ENCODE measurements at regions of chr20 and their contacts with region 1.

Region 1: DNA sequence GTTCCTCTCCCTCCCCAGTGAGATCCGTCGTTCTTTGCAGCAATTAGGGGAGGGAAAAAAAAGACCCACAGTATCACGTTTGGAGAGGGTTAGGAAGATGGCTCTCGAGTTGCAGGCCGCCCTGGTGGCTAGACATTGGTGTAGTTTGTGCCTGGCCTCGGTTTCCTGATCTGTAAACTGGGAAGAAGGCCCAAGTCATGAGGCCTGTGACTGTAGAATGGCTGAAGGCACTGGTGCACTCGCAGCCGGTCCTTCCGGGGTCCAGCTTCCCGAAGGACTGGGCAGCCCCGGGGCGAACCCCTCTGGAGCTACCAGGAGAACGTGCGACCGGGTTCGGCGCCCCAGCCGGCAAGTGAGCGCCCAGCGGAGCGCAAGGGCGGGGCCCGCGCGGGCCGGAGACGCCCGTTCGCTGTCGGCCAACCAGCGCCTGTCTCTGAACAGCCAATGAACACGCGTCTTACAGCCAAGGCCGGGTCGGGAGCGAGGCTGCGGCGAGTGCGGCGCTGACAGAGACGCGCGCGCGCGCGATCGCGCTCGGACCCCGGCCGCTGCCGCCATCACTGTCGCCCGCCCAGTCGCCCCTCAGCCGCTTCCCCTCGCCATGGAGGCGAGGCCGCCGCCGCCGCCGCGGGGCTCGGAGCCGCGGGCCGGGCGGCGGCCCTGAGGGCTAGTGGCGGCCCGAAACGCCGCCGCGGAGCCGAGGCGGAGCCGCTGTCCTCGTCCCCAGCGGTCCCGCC is at the start of gene PTPRA:
- DNase-seq: peak; percentile 80 to 91 (median 88)
- ATAC-seq: peak; percentile 96
- H3K4me3 ChIP-seq: peak within 1 kb of the TSS; percentile 80
- H3K4me3 Mint-ChIP-seq: peak within 1 kb of the TSS; percentile 84 to 96 (median 94)
- H3K27ac ChIP-seq: peak within 1 kb of the TSS; percentile 71
- H3K27ac Mint-ChIP-seq: peak within 1 kb of the TSS; percentile 83 to 95 (median 90)
- H3K4me1 ChIP-seq: peaks cover 25% of the 10 kb centered on the region in 2 donors
- H3K4me1 Mint-ChIP-seq: peaks cover 31 to 47% (median 42%) of the 10 kb centered on the region in 7 donors
- H3K27me3 ChIP-seq: no peaks in the 10 kb centered on the region
- H3K27me3 Mint-ChIP-seq: no peaks in the 10 kb centered on the region
- total RNA-seq, gene PTPRA: 68.0 to 86.6 (median 81.2) TPM

Region 2: GRCh38 chr20:2544211-2544610 is 329.0 kb before region 1 on chr20:
- CTCF ChIA-PET with region 1: no interaction called
- POLR2A ChIA-PET with region 1: no interaction called
- intact Hi-C with region 1: no loop called
- DNase-seq: no peak
- ATAC-seq: no peak
- H3K4me3 ChIP-seq: no peak overlapping the region
- H3K4me3 Mint-ChIP-seq: no peak overlapping the region
- H3K27ac ChIP-seq: no peak overlapping the region
- H3K27ac Mint-ChIP-seq: no peak overlapping the region
- H3K4me1 ChIP-seq: no peaks in the 10 kb centered on the region
- H3K4me1 Mint-ChIP-seq: no peaks in the 10 kb centered on the region
- H3K27me3 ChIP-seq: no peaks in the 10 kb centered on the region
- H3K27me3 Mint-ChIP-seq: peaks cover 9 to 50% (median 40%) of the 10 kb centered on the region in 5 donors

Region 3: GRCh38 chr20:2693286-2694000 is 179.7 kb before region 1 on chr20:
- CTCF ChIA-PET with region 1: no interaction called
- POLR2A ChIA-PET with region 1: no interaction called
- intact Hi-C with region 1: loop called (anchors 1 kb)
- DNase-seq: peak; percentile 15 to 70 (median 38)
- ATAC-seq: peak; percentile 73
- H3K4me3 ChIP-seq: no peak overlapping the region
- H3K4me3 Mint-ChIP-seq: peak overlapping the region in 4 of 10 donors; percentile 14 to 72 (median 42)
- H3K27ac ChIP-seq: no peak overlapping the region
- H3K27ac Mint-ChIP-seq: no peak overlapping the region
- H3K4me1 ChIP-seq: peaks cover 2% of the 10 kb centered on the region in 2 donors
- H3K4me1 Mint-ChIP-seq: peaks cover 16 to 26% (median 20%) of the 10 kb centered on the region in 7 donors
- H3K27me3 ChIP-seq: peaks cover 4 to 9% of the 10 kb centered on the region in 2 donors
- H3K27me3 Mint-ChIP-seq: peaks cover 16 to 55% (median 23%) of the 10 kb centered on the region in 5 donors

Region 4: GRCh38 chr20:2822073-2822472 is 51.1 kb before region 1 on chr20:
- CTCF ChIA-PET with region 1: no interaction called
- POLR2A ChIA-PET with region 1: interaction called, 3 read pairs
- intact Hi-C with region 1: loop called in 1 of 2 experiments (anchors 10 kb)
- DNase-seq: peak in 7 of 9 donors; percentile 53 to 67 (median 62)
- ATAC-seq: peak; percentile 90
- H3K4me3 ChIP-seq: no peak overlapping the region
- H3K4me3 Mint-ChIP-seq: peak overlapping the region in 9 of 10 donors; percentile 60 to 86 (median 73)
- H3K27ac ChIP-seq: no peak overlapping the region
- H3K27ac Mint-ChIP-seq: peak overlapping the region in 2 of 9 donors; percentile 56
- H3K4me1 ChIP-seq: peaks cover 14 to 18% of the 10 kb centered on the region in 2 donors
- H3K4me1 Mint-ChIP-seq: peaks cover 25 to 35% (median 34%) of the 10 kb centered on the region in 7 donors
- H3K27me3 ChIP-seq: no peaks in the 10 kb centered on the region
- H3K27me3 Mint-ChIP-seq: peaks cover 8 to 57% (median 23%) of the 10 kb centered on the region in 5 donors

Region 5: GRCh38 chr20:2955257-2955970 is 82.2 kb after region 1 on chr20:
- CTCF ChIA-PET with region 1: no interaction called
- POLR2A ChIA-PET with region 1: no interaction called
- intact Hi-C with region 1: no loop called
- DNase-seq: no peak
- ATAC-seq: no peak
- H3K4me3 ChIP-seq: no peak overlapping the region
- H3K4me3 Mint-ChIP-seq: no peak overlapping the region
- H3K27ac ChIP-seq: no peak overlapping the region
- H3K27ac Mint-ChIP-seq: peak overlapping the region in 1 of 9 donors; percentile 13
- H3K4me1 ChIP-seq: no peaks in the 10 kb centered on the region
- H3K4me1 Mint-ChIP-seq: peaks cover 11 to 22% (median 16%) of the 10 kb centered on the region in 7 donors
- H3K27me3 ChIP-seq: no peaks in the 10 kb centered on the region
- H3K27me3 Mint-ChIP-seq: no peaks in the 10 kb centered on the region

Region 6: GRCh38 chr20:2983508-2983907 is 110.3 kb after region 1 on chr20:
- CTCF ChIA-PET with region 1: interaction called, 3 read pairs
- POLR2A ChIA-PET with region 1: no interaction called
- intact Hi-C with region 1: loop called in 1 of 2 experiments (anchors 2 kb)
- DNase-seq: no peak
- ATAC-seq: no peak
- H3K4me3 ChIP-seq: no peak overlapping the region
- H3K4me3 Mint-ChIP-seq: no peak overlapping the region
- H3K27ac ChIP-seq: no peak overlapping the region
- H3K27ac Mint-ChIP-seq: no peak overlapping the region
- H3K4me1 ChIP-seq: peaks cover 0 to 7% of the 10 kb centered on the region in 2 donors
- H3K4me1 Mint-ChIP-seq: peaks cover 4 to 31% (median 7%) of the 10 kb centered on the region in 7 donors
- H3K27me3 ChIP-seq: no peaks in the 10 kb centered on the region
- H3K27me3 Mint-ChIP-seq: no peaks in the 10 kb centered on the region

Region 7: DNA sequence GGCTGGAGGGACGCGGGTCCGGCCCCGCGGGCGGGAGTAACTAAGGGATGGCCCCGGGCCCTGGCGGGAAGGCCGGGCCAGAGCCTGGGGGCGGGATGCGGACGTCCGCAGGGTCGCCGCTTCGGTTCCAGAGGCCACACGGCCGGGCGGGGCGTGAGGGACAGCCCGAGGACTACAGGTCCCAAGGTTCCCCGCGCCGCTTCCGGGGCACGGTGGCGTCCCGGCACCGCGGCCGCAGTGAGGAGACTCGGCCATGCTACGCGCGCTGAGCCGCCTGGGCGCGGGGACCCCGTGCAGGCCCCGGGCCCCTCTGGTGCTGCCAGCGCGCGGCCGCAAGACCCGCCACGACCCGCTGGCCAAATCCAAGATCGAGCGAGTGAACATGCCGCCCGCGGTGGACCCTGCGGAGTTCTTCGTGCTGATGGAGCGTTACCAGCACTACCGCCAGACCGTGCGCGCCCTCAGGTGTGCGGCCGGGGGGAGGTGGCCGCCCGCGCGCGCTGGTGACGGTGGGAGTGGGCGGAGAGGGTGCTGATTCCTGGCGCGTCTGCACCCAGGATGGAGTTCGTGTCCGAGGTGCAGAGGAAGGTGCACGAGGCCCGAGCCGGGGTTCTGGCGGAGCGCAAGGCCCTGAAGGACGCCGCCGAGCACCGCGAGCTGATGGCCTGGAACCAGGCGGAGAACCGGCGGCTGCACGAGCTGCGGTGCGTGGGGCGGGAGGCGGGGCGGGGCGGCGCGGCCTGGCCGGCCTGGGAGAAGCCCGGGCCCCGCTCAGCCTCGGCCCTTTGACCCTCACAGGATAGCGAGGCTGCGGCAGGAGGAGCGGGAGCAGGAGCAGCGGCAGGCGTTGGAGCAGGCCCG is 172.9 kb after region 1 on chr20 and contains the start of gene MRPS26:
- CTCF ChIA-PET with region 1: no interaction called
- POLR2A ChIA-PET with region 1: no interaction called
- intact Hi-C with region 1: loop called (anchors 1 to 2 kb)
- DNase-seq: peak; percentile 63 to 89 (median 76)
- ATAC-seq: peak; percentile 93
- H3K4me3 ChIP-seq: peak within 1 kb of the TSS; percentile 91
- H3K4me3 Mint-ChIP-seq: peak within 1 kb of the TSS; percentile 82 to 95 (median 92)
- H3K27ac ChIP-seq: peak within 1 kb of the TSS; percentile 70
- H3K27ac Mint-ChIP-seq: peak within 1 kb of the TSS; percentile 69 to 90 (median 79)
- H3K4me1 ChIP-seq: peaks cover 4 to 11% of the 10 kb centered on the region in 2 donors
- H3K4me1 Mint-ChIP-seq: peaks cover 11 to 23% (median 18%) of the 10 kb centered on the region in 7 donors
- H3K27me3 ChIP-seq: no peaks in the 10 kb centered on the region
- H3K27me3 Mint-ChIP-seq: no peaks in the 10 kb centered on the region
- total RNA-seq, gene MRPS26: 22.2 to 41.6 (median 29.5) TPM